Spleen (tissue), 13 donors: ENCODE measurements at regions of chrX and their contacts with region 1.

Region 1: GRCh38 chrX:20530406-20530921 is 263.8 kb upstream of the RPS6KA3 start:
- DNase-seq: no peak
- H3K4me3 ChIP-seq: no peak overlapping the region
- H3K27ac ChIP-seq: no peak overlapping the region
- H3K4me1 ChIP-seq: peaks cover 0 to 4% (median 0%) of the 10 kb centered on the region in 6 donors
- H3K27me3 ChIP-seq: peaks cover 0 to 28% (median 12%) of the 10 kb centered on the region in 7 donors
- CTCF ChIP-seq: peak in 10 of 11 experiments; percentile 27 to 71 (median 60)
- POLR2A ChIP-seq: no peak

Region 2: DNA sequence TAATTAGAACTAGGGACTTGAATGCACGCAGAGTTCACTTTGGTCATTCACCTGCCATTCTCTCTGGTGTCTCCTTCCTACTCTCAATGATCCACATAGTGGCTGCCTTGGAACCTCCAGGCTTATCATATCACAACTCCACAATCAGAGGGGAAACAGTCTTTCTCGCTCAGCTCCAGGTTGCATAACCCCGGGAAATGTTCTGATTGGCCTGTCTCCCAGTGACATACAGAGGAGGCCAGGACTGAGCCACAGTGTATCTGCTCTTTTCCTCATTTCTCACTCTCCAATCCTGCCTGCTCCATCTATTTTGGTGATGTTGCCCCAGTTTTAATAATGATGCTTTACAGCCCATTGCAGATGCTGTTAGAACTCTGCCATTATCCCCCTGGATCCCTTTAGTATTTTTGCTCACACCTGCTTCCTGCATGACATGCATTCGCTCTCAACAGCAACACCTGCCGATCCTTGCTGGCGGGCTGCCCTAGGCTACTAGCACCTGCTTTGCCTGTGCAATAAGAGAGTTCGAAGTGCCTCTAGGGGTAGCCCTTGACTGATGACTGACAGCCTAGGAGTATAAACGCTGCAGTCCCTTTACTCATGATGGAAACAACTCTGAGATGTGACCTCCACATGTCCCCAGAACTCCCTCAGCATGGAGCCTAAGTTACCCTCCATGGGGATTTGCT is 52.5 kb before region 1 on chrX:
- intact Hi-C with region 1: no loop called
- DNase-seq: no peak
- H3K4me3 ChIP-seq: no peak overlapping the region
- H3K27ac ChIP-seq: no peak overlapping the region
- H3K4me1 ChIP-seq: no peaks in the 10 kb centered on the region
- H3K27me3 ChIP-seq: peaks cover 0 to 4% (median 0%) of the 10 kb centered on the region in 7 donors
- CTCF ChIP-seq: no peak
- POLR2A ChIP-seq: no peak

Region 3: DNA sequence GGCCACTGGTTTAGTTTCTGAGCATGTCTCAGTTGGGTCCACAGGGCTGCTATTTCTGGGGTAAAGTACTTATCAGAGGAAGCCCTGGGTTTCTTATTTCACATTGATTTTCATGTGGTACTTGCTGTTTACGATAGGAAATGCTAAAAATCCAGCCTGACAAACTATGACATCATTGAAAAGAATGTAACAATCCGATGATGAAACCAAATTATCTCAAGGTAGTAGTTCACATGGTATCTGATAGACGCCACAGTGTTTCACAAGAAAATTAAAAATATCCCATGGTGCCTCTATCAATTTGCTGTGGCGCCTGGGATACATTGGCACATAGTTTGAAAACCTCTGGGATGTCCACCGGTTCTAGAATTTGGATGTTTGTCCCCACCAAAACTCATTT is 155.2 kb after region 1 on chrX:
- intact Hi-C with region 1: no loop called
- DNase-seq: no peak
- H3K4me3 ChIP-seq: no peak overlapping the region
- H3K27ac ChIP-seq: no peak overlapping the region
- H3K4me1 ChIP-seq: no peaks in the 10 kb centered on the region
- H3K27me3 ChIP-seq: no peaks in the 10 kb centered on the region
- CTCF ChIP-seq: no peak
- POLR2A ChIP-seq: no peak

Region 4: DNA sequence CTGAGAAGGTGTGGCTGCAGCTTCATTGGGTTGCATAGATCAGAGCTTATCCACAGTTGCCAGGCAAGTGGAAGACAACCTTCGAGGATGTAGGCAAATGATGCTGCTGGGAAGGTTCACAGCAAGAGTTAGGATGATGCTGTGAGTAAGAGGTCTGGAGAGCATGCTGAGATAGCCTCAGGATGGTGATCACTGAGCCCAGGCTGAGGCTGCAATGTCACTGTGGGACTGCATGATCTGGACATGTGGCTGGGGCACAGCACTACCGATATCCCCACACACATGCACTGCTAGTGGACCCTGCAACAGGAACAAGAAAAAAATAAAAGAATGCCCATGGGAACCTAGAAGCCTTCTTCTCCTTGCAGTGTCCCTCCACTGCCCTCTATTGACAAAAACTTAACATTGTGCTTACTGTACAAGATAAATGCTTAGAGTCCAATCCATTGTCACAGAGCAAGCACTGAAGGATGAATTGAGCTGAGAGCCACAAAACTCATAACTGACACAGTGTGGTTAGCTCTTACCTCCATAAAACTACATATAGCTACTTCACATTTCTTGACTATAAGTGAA is 949.3 kb after region 1 on chrX:
- intact Hi-C with region 1: loop called (anchors 10 kb)
- DNase-seq: no peak
- H3K4me3 ChIP-seq: no peak overlapping the region
- H3K27ac ChIP-seq: no peak overlapping the region
- H3K4me1 ChIP-seq: peaks cover 0 to 4% (median 0%) of the 10 kb centered on the region in 6 donors
- H3K27me3 ChIP-seq: no peaks in the 10 kb centered on the region
- CTCF ChIP-seq: peak in 7 of 11 experiments; percentile 24 to 56 (median 42)
- POLR2A ChIP-seq: no peak

Region 5: GRCh38 chrX:21745756-21746155 is 1215.3 kb after region 1 on chrX:
- intact Hi-C with region 1: loop called (anchors 10 kb)
- DNase-seq: no peak
- H3K4me3 ChIP-seq: no peak overlapping the region
- H3K27ac ChIP-seq: no peak overlapping the region
- H3K4me1 ChIP-seq: no peaks in the 10 kb centered on the region
- H3K27me3 ChIP-seq: peaks cover 0 to 25% (median 0%) of the 10 kb centered on the region in 7 donors
- CTCF ChIP-seq: peak in 10 of 11 experiments; percentile 22 to 59 (median 44)
- POLR2A ChIP-seq: no peak